ENCODE measurements at regions of chr17 and their contacts with region 1.

Region 1: DNA sequence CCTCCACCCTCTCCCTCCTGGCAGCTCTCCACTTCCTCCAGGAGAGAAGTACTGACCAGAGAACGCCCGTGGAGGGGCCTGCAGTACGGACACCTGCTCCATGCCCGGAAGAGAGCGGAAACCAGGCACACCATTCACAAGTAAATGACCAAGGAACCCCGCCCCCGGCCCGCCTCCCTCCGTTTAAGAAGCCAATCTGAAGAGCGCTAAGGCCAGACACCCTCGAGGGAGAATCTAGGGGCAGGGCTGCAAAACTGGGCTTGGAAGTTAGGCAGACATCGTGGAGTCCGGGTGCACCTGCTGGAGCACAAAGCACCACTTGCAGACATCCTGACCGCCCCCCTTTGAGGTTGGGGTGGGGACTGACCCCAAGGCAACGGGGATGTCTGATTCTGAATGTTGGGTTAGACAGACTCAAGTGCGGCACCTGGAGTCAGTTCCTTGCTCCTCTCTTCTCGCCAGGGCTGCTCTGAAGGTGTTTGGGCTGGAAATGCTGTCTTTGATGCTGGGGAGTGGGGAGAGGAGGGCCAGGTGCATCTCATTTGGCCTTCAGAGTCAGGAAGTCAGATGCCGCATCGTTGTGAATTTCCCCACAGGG is 964 bp upstream of the FAAP100 start:
- DNase-seq: peak; percentile 51 to 69
- ATAC-seq: peak; percentile 36 to 37
- H3K4me3 ChIP-seq: peak overlapping the region; percentile 86 to 92 (median 90)
- H3K27ac ChIP-seq: peak overlapping the region; percentile 90 to 92 (median 90)
- H3K4me1 ChIP-seq: peaks cover 28 to 36% of the 10 kb centered on the region in 2 donors
- H3K27me3 ChIP-seq: no peaks in the 10 kb centered on the region
- CTCF ChIP-seq: no peak
- POLR2A ChIP-seq: peak in 1 of 2 donors; percentile 5

Region 2: GRCh38 chr17:81512560-81513371 is 40.4 kb before region 1 on chr17 and contains the start of gene ACTG1:
- in situ Hi-C with region 1: no loop called
- intact Hi-C with region 1: loop called (anchors 5 kb)
- DNase-seq: peak; percentile 89 to 94
- ATAC-seq: peak; percentile 72 to 73
- H3K4me3 ChIP-seq: peak within 1 kb of the TSS; percentile 81 to 95 (median 89)
- H3K27ac ChIP-seq: peak within 1 kb of the TSS; percentile 91 to 100 (median 99)
- H3K4me1 ChIP-seq: peaks cover 30 to 39% of the 10 kb centered on the region in 2 donors
- H3K27me3 ChIP-seq: no peaks in the 10 kb centered on the region
- CTCF ChIP-seq: no peak
- POLR2A ChIP-seq: peak; percentile 96 to 98
- total RNA-seq, gene ACTG1: 322 to 934 (median 415) TPM

Measured in gastrocnemius medialis (tissue), 4 donors.